Right lobe of liver (tissue), 6 donors: ENCODE measurements at regions of chr19 and their contacts with region 1.

Region 1: DNA sequence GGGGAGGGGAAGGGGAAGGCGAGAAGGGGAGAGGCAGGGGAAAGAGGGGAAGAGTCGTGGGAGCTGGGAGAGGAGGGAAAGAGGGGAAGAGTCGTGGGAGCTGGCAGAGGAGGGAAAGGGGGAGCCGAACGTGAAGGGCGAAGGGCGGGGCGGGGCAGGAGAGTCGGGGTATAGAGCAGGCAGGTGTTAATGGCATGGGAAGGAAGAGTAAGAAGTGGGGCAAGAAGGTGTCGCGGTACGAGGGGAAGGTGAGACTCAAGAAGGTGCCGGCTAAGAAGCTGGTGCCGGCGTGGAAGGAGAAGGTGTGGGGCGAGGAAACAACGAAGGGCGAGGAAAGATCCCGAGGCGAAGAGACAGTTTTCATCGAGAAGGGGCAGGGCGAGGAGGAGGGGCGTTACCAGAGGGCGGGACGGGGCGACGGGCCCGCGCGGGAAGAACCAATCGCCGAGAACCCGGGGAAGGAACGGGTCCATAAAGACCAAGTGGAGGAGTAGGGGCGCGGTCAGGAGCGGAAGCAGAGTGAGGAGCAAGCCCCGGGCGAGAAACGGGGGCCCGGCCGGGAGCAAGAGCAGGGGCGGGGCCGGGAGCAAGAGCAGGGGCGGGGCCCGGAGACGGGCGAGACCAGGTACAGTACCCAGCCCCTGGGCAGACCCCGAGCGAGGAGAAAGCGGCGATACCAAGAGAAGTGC is 463 bp downstream of the CATSPERG start:
- DNase-seq: peak; percentile 97
- ATAC-seq: peak; percentile 81 to 89 (median 86)
- H3K4me3 ChIP-seq: peak overlapping the region; percentile 48 to 66 (median 65)
- H3K27ac ChIP-seq: peak overlapping the region; percentile 58 to 79 (median 78)
- H3K4me1 ChIP-seq: peaks cover 0 to 4% (median 0%) of the 10 kb centered on the region in 4 donors
- H3K27me3 ChIP-seq: no peaks in the 10 kb centered on the region
- CTCF ChIP-seq: no peak
- POLR2A ChIP-seq: no peak

Region 2: DNA sequence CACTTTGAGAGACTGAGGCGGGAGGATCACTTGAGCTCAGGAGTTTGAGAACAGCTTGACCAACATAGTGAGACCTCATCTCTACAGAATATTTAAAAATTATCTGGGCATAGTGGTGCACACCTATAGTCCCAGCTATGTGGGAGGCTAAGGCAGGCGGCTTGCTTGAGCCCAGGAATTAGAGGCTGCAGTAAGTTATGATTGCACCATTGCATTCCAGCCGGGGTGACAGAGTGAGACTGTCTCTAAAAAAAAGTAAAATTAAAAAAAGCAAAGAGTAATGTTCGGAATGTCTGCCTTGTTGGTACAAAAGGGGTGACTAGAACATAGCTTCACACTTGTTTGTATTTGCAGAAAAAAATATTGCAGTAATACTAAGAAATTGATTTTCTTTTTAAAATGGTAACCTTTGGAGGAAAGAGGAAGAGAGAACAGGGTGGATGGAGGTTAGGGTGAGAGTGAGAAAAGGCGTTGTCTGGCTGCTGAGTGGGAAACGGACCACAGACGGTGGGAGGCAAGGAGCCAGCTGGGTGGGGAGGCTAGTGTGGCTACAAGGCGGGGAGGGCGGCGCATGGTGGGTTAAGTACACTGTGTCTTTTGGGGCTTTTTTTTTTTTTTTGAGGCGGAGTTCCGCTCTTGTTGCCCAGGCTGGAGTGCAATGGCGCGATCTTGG is 90.1 kb before region 1 on chr19:
- intact Hi-C with region 1: loop called in 1 of 2 experiments (anchors 2 kb)
- DNase-seq: no peak
- ATAC-seq: no peak
- H3K4me3 ChIP-seq: no peak overlapping the region
- H3K27ac ChIP-seq: no peak overlapping the region
- H3K4me1 ChIP-seq: peaks cover 0 to 10% (median 0%) of the 10 kb centered on the region in 4 donors
- H3K27me3 ChIP-seq: no peaks in the 10 kb centered on the region
- CTCF ChIP-seq: no peak
- POLR2A ChIP-seq: no peak

Region 3: DNA sequence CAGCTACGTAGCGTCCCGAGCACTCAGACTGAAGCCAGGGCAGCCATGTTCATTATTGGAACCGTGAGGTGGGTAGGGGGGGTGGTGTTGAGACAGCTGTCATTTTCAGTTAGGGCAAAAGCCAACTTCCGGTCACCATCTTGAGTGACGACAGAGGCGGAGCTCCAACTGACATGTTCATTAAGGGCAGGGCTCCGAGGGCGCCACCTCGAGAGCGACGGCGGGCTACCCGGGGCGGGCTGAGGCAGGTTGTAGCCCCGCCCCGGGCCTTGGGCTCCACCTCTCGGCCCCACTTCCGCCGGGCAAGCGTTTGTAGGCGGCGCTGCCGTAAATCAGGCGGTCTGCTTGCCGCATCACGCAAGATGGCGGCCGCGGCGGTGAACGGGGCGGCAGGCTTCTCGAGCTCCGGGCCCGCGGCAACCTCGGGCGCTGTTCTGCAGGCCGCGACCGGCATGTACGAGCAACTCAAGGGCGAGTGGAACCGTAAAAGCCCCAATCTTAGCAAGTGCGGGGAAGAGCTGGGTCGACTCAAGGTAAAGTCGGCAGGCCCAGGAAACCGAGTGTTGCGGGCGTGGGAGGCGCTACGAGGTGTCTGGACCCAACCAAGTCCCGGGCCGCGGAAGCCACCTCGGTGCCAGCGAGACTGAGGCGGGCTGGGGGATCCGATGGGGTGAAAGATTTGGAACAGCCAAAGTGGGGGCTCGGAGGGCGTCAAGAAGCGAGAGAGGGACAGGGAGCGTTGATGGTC is 38.5 kb after region 1 on chr19 and contains the start of gene PSMD8:
- intact Hi-C with region 1: no loop called
- DNase-seq: peak; percentile 99 to 100 (median 100)
- ATAC-seq: peak; percentile 98 to 99 (median 98)
- H3K4me3 ChIP-seq: peak within 1 kb of the TSS; percentile 81 to 92 (median 82)
- H3K27ac ChIP-seq: peak within 1 kb of the TSS; percentile 69 to 89 (median 78)
- H3K4me1 ChIP-seq: peaks cover 0 to 8% (median 3%) of the 10 kb centered on the region in 4 donors
- H3K27me3 ChIP-seq: no peaks in the 10 kb centered on the region
- CTCF ChIP-seq: peak in 3 of 4 donors; percentile 49 to 55 (median 51)
- POLR2A ChIP-seq: peak; percentile 94
- total RNA-seq, gene PSMD8: 69.2 to 181 (median 75.2) TPM